ENCODE measurements at regions of chr19 and their contacts with region 1.

Region 1: DNA sequence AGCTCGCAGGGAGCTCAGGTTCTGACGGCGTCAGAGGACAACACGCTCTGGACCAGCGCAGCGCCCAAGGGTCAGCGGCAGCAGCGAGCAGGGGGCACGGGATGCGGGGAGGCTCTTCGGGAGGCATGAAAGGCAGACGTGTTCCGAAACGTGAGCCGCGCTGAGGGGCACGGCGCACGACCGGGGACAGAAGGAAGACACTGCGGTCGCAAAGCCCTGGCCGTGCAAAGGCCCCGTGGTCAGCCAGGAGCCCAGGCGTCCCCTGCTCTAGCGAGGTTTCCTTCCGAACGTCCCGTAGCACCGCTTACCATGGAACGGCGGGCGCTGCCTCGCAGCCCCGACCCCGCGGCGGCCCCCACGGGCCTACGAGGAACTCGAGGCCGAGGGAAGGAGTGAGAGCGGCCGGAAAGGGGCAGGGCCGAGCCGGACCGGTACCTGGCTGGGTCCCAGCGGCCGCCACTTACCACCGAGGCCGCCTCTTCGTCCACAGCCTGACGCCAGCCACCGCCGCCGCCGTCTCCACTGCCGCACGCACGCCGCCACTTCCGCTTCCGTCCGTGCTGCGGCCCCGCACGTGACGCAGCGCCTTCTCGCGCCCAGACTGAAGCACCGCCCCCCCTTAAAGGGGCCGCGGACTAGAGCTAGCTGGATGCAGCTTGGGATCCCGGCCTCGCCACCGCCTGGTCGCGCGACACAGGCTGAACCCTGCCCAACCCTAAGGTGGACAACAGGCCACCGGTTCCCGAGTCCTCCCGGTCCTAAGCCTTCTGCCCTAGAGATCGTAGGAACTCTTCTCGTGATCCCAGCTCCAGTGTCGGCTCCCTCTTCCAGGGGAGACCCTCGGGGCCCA is 9.4 kb downstream of the ABHD17A start:
- DNase-seq: peak; percentile 93
- ATAC-seq: peak; percentile 87
- H3K4me3 Mint-ChIP-seq: peak overlapping the region; percentile 99
- H3K27ac Mint-ChIP-seq: peak overlapping the region; percentile 98
- H3K4me1 Mint-ChIP-seq: peaks cover 31% of the 10 kb centered on the region
- H3K27me3 Mint-ChIP-seq: no peaks in the 10 kb centered on the region

Region 2: GRCh38 chr19:1863726-1864480 is 12.0 kb before region 1 on chr19:
- CTCF ChIA-PET with region 1: interaction called, 16 read pairs
- DNase-seq: peak; percentile 95
- ATAC-seq: peak; percentile 79
- H3K4me3 Mint-ChIP-seq: peak overlapping the region; percentile 69
- H3K27ac Mint-ChIP-seq: peak overlapping the region; percentile 78
- H3K4me1 Mint-ChIP-seq: peaks cover 34% of the 10 kb centered on the region
- H3K27me3 Mint-ChIP-seq: no peaks in the 10 kb centered on the region